Activated CD8-positive, alpha-beta T cell treated with anti-CD3 and anti-CD28 coated beads for 36 hours (primary cell): ENCODE measurements at regions of chr1 and their contacts with region 1.

Region 1: GRCh38 chr1:24923485-24924113 is 6.5 kb downstream of the RUNX3 start:
- DNase-seq: peak; percentile 54
- ATAC-seq: peak; percentile 9
- H3K4me3 Mint-ChIP-seq: peak overlapping the region; percentile 96
- H3K27ac Mint-ChIP-seq: peak overlapping the region; percentile 72
- H3K4me1 Mint-ChIP-seq: peaks cover 85% of the 10 kb centered on the region
- H3K27me3 Mint-ChIP-seq: no peaks in the 10 kb centered on the region
- CTCF ChIP-seq: no peak

Region 2: GRCh38 chr1:24909388-24909898 is 14.2 kb before region 1 on chr1:
- CTCF ChIA-PET with region 1: interaction called, 6 read pairs
- POLR2A ChIA-PET with region 1: interaction called, 122 read pairs
- intact Hi-C with region 1: loop called (anchors 1 kb)
- DNase-seq: no peak
- ATAC-seq: no peak
- H3K4me3 Mint-ChIP-seq: peak overlapping the region; percentile 26
- H3K27ac Mint-ChIP-seq: peak overlapping the region; percentile 91
- H3K4me1 Mint-ChIP-seq: peaks cover 62% of the 10 kb centered on the region
- H3K27me3 Mint-ChIP-seq: no peaks in the 10 kb centered on the region
- CTCF ChIP-seq: no peak